Endothelial cell of umbilical vein (primary cell): ENCODE measurements at regions of chr20 and their contacts with region 1.

Region 1: GRCh38 chr20:62846188-62846890 is 15.3 kb downstream of the TCFL5 start:
- DNase-seq: no peak
- H3K4me3 ChIP-seq: no peak overlapping the region
- H3K27ac ChIP-seq: no peak overlapping the region
- H3K4me1 ChIP-seq: no peaks in the 10 kb centered on the region
- H3K27me3 ChIP-seq: no peaks in the 10 kb centered on the region
- CTCF ChIP-seq: no peak
- POLR2A ChIP-seq: no peak

Region 2: GRCh38 chr20:62808211-62808865 is 38.0 kb before region 1 on chr20:
- CTCF ChIA-PET with region 1: interaction called, 4 read pairs
- POLR2A ChIA-PET with region 1: no interaction called
- dilution Hi-C with region 1: no loop called
- intact Hi-C with region 1: loop called (anchors 1 kb)
- DNase-seq: peak; percentile 44
- H3K4me3 ChIP-seq: no peak overlapping the region
- H3K27ac ChIP-seq: no peak overlapping the region
- H3K4me1 ChIP-seq: peaks cover 11% of the 10 kb centered on the region
- H3K27me3 ChIP-seq: no peaks in the 10 kb centered on the region
- CTCF ChIP-seq: peak; percentile 78 to 93
- POLR2A ChIP-seq: no peak

Region 3: GRCh38 chr20:62822788-62823651 is 23.3 kb before region 1 on chr20:
- CTCF ChIA-PET with region 1: interaction called, 14 read pairs
- POLR2A ChIA-PET with region 1: no interaction called
- dilution Hi-C with region 1: no loop called
- intact Hi-C with region 1: no loop called
- DNase-seq: no peak
- H3K4me3 ChIP-seq: no peak overlapping the region
- H3K27ac ChIP-seq: no peak overlapping the region
- H3K4me1 ChIP-seq: peaks cover 15% of the 10 kb centered on the region
- H3K27me3 ChIP-seq: no peaks in the 10 kb centered on the region
- CTCF ChIP-seq: peak; percentile 10 to 17
- POLR2A ChIP-seq: no peak